OCI-LY7 (cell line): ENCODE measurements at regions of chr4 and their contacts with region 1.

Region 1: GRCh38 chr4:110622841-110623717 is at the start of gene PITX2:
- DNase-seq: peak; percentile 89
- H3K4me3 ChIP-seq: peak within 1 kb of the TSS; percentile 75
- H3K27ac ChIP-seq: peak within 1 kb of the TSS; percentile 48
- H3K4me1 ChIP-seq: no peaks in the 10 kb centered on the region
- CTCF ChIP-seq: no peak
- total RNA-seq, gene PITX2: 3.3 and 4.4 TPM in 2 replicates

Region 2: GRCh38 chr4:110567214-110567613 is 55.9 kb before region 1 on chr4:
- CTCF ChIA-PET with region 1: no interaction called
- POLR2A ChIA-PET with region 1: no interaction called
- intact Hi-C with region 1: loop called (anchors 2 kb)
- DNase-seq: no peak
- H3K4me3 ChIP-seq: no peak overlapping the region
- H3K27ac ChIP-seq: no peak overlapping the region
- H3K4me1 ChIP-seq: no peaks in the 10 kb centered on the region
- CTCF ChIP-seq: no peak

Region 3: DNA sequence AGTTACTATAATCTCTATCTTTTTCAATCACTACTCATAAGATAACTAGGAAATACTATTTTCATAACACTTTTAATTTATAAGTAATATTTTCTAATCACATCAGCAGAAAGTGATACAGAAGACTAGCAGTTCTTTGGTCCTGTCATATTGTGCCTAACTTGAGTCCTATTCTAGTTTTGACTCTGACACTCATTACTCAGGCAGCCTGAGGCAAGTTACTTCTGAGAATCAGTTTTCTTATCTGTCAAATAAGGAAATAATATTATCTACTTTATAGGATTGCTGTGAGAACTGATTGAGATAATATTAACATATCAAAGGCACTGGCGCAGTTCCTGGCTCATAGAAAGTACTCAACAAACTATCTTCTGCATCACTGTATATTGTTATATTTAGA is 18.0 kb before region 1 on chr4:
- CTCF ChIA-PET with region 1: no interaction called
- POLR2A ChIA-PET with region 1: no interaction called
- intact Hi-C with region 1: no loop called
- DNase-seq: no peak
- H3K4me3 ChIP-seq: no peak overlapping the region
- H3K27ac ChIP-seq: no peak overlapping the region
- H3K4me1 ChIP-seq: no peaks in the 10 kb centered on the region
- CTCF ChIP-seq: no peak